Activated naive CD4-positive, alpha-beta T cell treated with anti-CD3 and anti-CD28 coated beads, Interleukin-2, amount 10 ng/mL, durations not matched to agents 7 days and 5 days (primary cell): ENCODE measurements at regions of chr11 and their contacts with region 1.

Region 1: DNA sequence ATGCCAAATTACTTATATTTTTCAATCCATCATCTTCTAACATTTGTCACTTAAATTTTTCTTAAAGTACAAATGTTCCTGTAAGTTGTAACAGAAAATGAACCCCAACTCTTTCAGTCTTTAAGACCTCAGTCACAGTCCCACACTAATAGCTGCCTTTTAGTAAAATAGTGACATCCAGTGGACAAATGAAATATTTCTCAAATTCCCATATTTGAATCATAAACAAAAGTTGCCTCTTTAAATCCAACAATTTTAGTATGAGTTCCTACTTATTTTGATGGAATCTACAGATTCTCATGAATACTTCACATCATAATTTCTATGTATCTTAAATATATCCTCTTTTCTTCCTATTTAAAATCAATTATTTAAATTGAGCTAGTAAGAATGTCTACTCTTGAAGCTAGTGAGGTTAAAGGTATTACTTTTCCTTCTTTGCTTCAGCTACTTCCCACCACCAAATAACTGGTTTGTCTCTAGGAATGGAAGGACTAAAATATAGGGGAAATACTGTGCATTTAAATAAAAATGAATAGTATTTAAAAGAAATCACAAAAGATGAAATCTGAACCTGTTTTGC is 9.2 kb downstream of the LIN7C start:
- DNase-seq: no peak
- H3K4me3 Mint-ChIP-seq: no peak overlapping the region
- H3K27ac Mint-ChIP-seq: no peak overlapping the region
- H3K4me1 Mint-ChIP-seq: peaks cover 6% of the 10 kb centered on the region
- H3K27me3 Mint-ChIP-seq: no peaks in the 10 kb centered on the region

Region 2: GRCh38 chr11:27300974-27301373 is 196.4 kb before region 1 on chr11:
- CTCF ChIA-PET with region 1: no interaction called
- DNase-seq: no peak
- H3K4me3 Mint-ChIP-seq: no peak overlapping the region
- H3K27ac Mint-ChIP-seq: no peak overlapping the region
- H3K4me1 Mint-ChIP-seq: no peaks in the 10 kb centered on the region
- H3K27me3 Mint-ChIP-seq: no peaks in the 10 kb centered on the region

Region 3: GRCh38 chr11:27485930-27486773 is 11.2 kb before region 1 on chr11:
- CTCF ChIA-PET with region 1: interaction called, 57 read pairs
- DNase-seq: peak; percentile 45
- H3K4me3 Mint-ChIP-seq: no peak overlapping the region
- H3K27ac Mint-ChIP-seq: no peak overlapping the region
- H3K4me1 Mint-ChIP-seq: no peaks in the 10 kb centered on the region
- H3K27me3 Mint-ChIP-seq: no peaks in the 10 kb centered on the region